ENCODE measurements at regions of chr7 and their contacts with region 1.

Region 1: GRCh38 chr7:73667344-73668102 is at the start of gene VPS37D:
- DNase-seq: peak; percentile 84 to 98 (median 93)
- ATAC-seq: peak; percentile 92
- H3K4me3 ChIP-seq: peak within 1 kb of the TSS; percentile 37 to 42
- H3K4me3 Mint-ChIP-seq: peak within 1 kb of the TSS; percentile 83
- H3K27ac ChIP-seq: no peak within 1 kb of the TSS
- H3K27ac Mint-ChIP-seq: no peak within 1 kb of the TSS
- H3K4me1 ChIP-seq: peaks cover 11% of the 10 kb centered on the region
- H3K4me1 Mint-ChIP-seq: peaks cover 7% of the 10 kb centered on the region
- H3K27me3 ChIP-seq: peaks cover 0 to 17% of the 10 kb centered on the region in 2 experiments
- H3K27me3 Mint-ChIP-seq: peaks cover 24% of the 10 kb centered on the region
- CTCF ChIP-seq: peak; percentile 62
- total RNA-seq, gene VPS37D: 0.89 to 1.3 TPM

Region 2: DNA sequence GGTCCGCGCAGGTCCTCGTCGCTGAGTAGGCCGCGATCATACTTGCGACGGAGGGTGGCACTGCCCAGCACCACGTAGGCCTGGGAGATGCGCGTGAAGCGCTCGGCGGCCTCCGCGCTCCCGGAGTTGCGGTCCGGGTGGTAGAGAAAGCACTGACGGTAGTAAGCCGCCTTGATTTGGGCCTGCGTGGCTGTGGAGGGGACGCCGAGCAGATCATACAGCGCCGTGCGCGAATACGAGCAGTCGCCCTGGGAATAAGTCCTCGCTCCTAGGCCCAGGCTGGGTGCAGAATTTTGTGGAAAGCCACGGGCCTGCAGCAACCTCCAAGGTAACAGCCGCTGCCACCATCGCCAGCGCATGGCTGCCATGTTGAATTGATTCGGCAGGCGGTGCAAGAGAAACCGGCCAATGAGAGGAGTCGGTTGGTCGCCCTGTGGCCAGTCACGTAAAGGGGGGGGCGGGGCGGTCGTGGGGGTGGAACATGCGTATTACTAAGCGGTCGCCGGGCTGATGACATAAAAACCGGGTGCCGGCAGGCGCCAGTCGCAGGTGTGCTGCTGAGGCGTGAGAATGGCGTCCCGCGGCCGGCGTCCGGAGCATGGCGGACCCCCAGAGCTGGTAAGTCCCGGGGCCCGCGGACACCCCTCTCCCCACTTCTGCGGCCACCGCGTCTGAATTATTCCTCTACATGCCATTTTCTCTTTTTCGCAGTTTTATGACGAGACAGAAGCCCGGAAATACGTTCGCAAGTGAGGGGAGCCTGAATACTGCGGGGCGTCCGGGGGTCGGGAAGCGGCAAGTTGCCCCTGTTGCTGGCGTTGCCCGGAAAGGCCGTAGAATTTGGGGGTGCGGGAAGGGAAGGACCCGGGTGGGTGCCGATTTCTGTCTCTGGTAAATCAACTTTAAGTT is 15.8 kb after region 1 on chr7 and contains the starts of genes BUD23 and DNAJC30:
- CTCF ChIA-PET with region 1: no interaction called
- POLR2A ChIA-PET with region 1: interaction called, 3 read pairs
- intact Hi-C with region 1: loop called (anchors 1 kb)
- DNase-seq: peak; percentile 95 to 97 (median 97)
- ATAC-seq: peak; percentile 98
- H3K4me3 ChIP-seq: peak within 1 kb of the TSS; percentile 80 to 96
- H3K4me3 Mint-ChIP-seq: peak within 1 kb of the TSS; percentile 93
- H3K27ac ChIP-seq: peak within 1 kb of the TSS; percentile 81 to 90
- H3K27ac Mint-ChIP-seq: peak within 1 kb of the TSS; percentile 97
- H3K4me1 ChIP-seq: peaks cover 29% of the 10 kb centered on the region
- H3K4me1 Mint-ChIP-seq: peaks cover 39% of the 10 kb centered on the region
- H3K27me3 ChIP-seq: no peaks in the 10 kb centered on the region
- H3K27me3 Mint-ChIP-seq: no peaks in the 10 kb centered on the region
- CTCF ChIP-seq: no peak
- total RNA-seq, gene BUD23: 123 to 129 TPM
- total RNA-seq, gene DNAJC30: 13.5 to 14.4 TPM

Region 3: DNA sequence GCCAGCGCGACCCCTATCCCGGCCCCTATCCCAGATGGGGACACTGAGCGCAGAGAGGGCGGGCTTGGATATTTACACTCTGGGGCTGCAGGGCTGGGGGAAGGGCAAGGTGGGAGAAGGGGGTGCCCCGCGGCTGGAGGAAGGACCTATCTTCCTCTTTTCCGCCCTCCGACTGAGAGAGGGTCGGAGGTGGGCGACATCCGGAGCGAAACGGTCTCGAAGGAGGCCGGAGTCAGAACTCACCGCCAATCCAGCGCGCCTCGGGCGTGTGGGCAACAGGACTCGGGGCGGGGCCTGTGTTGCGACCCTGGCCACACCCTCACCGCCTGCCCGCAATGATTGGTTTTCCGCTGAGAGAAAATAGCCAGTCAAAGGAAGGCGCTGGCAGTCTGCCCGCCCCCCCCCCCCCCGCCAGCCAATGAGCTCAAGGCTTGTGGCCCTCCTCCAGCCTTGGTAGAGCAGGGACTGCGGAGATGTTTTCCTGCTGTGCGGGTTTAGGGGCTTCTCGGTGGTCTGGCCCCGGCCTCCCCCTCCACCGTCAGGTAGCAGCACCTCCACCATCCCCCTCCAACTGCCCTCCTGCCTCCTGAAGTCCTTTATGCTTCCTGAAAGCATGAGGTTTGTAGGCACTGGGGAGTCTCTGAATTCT is 174.8 kb after region 1 on chr7 and contains the start of gene METTL27:
- CTCF ChIA-PET with region 1: no interaction called
- POLR2A ChIA-PET with region 1: no interaction called
- intact Hi-C with region 1: loop called in 1 of 2 experiments (anchors 5 kb)
- DNase-seq: peak; percentile 76 to 94 (median 90)
- ATAC-seq: peak; percentile 98
- H3K4me3 ChIP-seq: peak within 1 kb of the TSS; percentile 58 to 77
- H3K4me3 Mint-ChIP-seq: peak within 1 kb of the TSS; percentile 85
- H3K27ac ChIP-seq: no peak within 1 kb of the TSS
- H3K27ac Mint-ChIP-seq: peak within 1 kb of the TSS; percentile 69
- H3K4me1 ChIP-seq: peaks cover 5% of the 10 kb centered on the region
- H3K4me1 Mint-ChIP-seq: peaks cover 13% of the 10 kb centered on the region
- H3K27me3 ChIP-seq: no peaks in the 10 kb centered on the region
- H3K27me3 Mint-ChIP-seq: no peaks in the 10 kb centered on the region
- CTCF ChIP-seq: no peak
- total RNA-seq, gene METTL27: not detected